Activated CD8-positive, alpha-beta T cell treated with anti-CD3 and anti-CD28 coated beads, Interleukin-2, amount 10 ng/mL, durations not matched to agents 7 days and 5 days (primary cell): ENCODE measurements at regions of chr16 and their contacts with region 1.

Region 1: DNA sequence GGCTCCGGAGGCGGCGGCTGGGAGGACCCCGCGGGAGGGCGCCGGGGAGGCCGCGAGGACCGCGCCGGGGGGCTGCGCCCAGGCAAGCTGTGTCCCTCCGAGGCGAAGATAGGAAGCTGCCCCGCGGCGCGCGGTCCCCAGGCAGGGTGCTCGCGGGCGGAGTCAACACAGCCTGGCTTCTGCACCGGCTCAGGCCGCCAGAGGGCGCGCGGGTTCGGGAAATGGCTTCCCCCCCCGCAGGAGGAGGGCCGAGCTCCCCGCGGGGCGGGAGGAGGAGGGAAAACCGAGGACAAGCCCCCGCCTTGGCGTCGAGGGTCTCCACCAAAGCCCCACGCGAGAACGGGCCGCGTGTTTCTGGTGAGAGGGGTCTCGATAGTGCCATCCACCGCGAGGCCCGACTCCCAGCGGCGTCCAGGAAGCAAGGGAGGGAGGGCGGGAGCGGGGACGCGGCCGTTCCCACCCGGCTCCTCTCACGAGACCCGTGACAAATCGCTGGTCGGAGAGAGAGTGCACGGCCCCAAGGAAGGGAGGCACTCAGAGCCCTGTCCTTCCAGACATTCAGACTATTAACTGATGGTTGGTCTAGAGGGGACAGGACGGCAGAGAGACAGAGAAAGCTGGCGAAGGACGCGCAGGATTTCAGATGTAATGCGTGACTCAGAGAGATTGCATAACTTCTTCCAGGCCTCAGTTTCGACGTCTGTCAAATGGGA is 64.4 kb upstream of the DNAJA2 start:
- DNase-seq: peak; percentile 90
- ATAC-seq: peak; percentile 97
- H3K4me3 Mint-ChIP-seq: peak overlapping the region; percentile 74
- H3K27ac Mint-ChIP-seq: no peak overlapping the region
- H3K4me1 Mint-ChIP-seq: peaks cover 4% of the 10 kb centered on the region
- H3K27me3 Mint-ChIP-seq: peaks cover 12% of the 10 kb centered on the region

Region 2: GRCh38 chr16:47018223-47018891 is 19.5 kb before region 1 on chr16:
- CTCF ChIA-PET with region 1: interaction called, 10 read pairs
- POLR2A ChIA-PET with region 1: interaction called, 3 read pairs
- DNase-seq: peak; percentile 57
- ATAC-seq: peak; percentile 82
- H3K4me3 Mint-ChIP-seq: no peak overlapping the region
- H3K27ac Mint-ChIP-seq: no peak overlapping the region
- H3K4me1 Mint-ChIP-seq: peaks cover 29% of the 10 kb centered on the region
- H3K27me3 Mint-ChIP-seq: peaks cover 3% of the 10 kb centered on the region

Region 3: GRCh38 chr16:47136101-47136820 is 98.4 kb after region 1 on chr16:
- CTCF ChIA-PET with region 1: interaction called, 21 read pairs
- POLR2A ChIA-PET with region 1: no interaction called
- DNase-seq: no peak
- ATAC-seq: peak; percentile 44
- H3K4me3 Mint-ChIP-seq: no peak overlapping the region
- H3K27ac Mint-ChIP-seq: no peak overlapping the region
- H3K4me1 Mint-ChIP-seq: peaks cover 6% of the 10 kb centered on the region
- H3K27me3 Mint-ChIP-seq: no peaks in the 10 kb centered on the region

Region 4: DNA sequence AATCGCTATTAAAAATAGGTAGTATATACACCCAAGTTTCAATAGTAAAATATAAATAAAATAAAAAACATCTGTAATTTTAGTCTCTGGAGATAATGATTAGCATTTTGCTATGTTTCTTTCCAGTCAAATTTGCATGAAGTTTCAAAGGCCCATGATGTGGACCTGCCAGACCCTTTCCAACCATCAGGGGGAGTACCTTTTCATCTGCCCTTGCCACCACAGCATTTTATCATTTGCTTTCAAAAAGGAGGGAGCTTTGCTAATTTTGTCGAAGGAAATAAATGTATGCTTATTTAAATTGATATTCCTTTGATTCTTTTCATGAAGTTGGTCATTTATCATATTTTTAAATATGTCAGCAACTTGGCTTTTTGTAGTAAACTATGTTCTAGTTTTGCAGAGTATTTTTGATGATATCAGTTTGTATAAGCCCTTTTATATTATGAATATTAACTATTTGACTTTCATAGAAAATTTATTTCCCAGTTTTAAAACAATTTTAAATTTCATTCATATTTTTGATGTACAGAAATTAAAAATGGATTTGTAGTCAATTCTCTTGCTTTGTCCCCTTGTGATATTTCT is 221.1 kb after region 1 on chr16:
- CTCF ChIA-PET with region 1: no interaction called
- POLR2A ChIA-PET with region 1: no interaction called
- DNase-seq: peak; percentile 24
- ATAC-seq: no peak
- H3K4me3 Mint-ChIP-seq: no peak overlapping the region
- H3K27ac Mint-ChIP-seq: no peak overlapping the region
- H3K4me1 Mint-ChIP-seq: no peaks in the 10 kb centered on the region
- H3K27me3 Mint-ChIP-seq: no peaks in the 10 kb centered on the region

Region 5: GRCh38 chr16:48156790-48157209 is 1118.9 kb after region 1 on chr16:
- CTCF ChIA-PET with region 1: interaction called, 11 read pairs
- POLR2A ChIA-PET with region 1: no interaction called
- DNase-seq: peak; percentile 83
- ATAC-seq: peak; percentile 72
- H3K4me3 Mint-ChIP-seq: no peak overlapping the region
- H3K27ac Mint-ChIP-seq: no peak overlapping the region
- H3K4me1 Mint-ChIP-seq: peaks cover 14% of the 10 kb centered on the region
- H3K27me3 Mint-ChIP-seq: peaks cover 10% of the 10 kb centered on the region

Region 6: DNA sequence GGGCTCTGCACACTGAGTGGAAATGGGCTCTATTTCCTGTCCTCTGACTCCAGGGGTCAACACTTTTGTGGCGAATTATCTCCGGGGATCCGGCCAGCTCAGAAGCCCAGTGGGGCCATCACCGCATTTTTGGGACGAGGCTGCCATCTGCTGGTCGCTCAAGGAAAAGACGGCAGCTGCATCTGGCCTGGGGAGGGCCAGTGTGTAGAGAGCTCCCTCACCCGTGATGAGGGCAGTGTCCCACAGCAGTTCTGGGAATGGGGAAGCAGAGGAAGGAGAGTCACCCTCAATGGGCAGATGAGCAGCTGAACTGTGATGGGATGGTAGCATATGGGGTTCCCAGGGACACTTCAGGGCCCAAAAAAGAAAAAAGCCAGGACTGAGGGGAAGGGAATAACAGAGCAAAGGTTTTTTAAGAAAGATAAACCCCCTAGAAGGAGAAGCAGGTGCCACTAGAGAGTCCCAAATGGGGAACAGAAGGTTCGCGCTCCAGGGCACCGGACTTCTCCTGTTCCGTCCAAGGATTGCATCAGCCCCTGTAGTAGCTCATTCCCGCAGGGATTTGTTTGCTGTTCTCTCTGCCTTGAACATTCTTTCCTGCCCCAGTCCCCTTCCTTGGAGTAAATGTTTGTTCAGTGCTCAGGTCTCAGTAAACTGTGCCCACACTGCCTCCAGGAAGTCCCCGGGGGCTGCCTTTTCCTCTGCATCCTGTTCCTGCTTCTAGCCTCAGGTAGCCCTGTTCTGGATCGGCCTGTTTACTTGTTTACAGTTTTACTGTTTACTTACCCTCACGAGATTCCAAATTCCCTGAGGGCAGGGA is 1127.2 kb after region 1 on chr16:
- CTCF ChIA-PET with region 1: interaction called, 10 read pairs
- POLR2A ChIA-PET with region 1: no interaction called
- DNase-seq: peak; percentile 71
- ATAC-seq: peak; percentile 96
- H3K4me3 Mint-ChIP-seq: no peak overlapping the region
- H3K27ac Mint-ChIP-seq: no peak overlapping the region
- H3K4me1 Mint-ChIP-seq: peaks cover 11% of the 10 kb centered on the region
- H3K27me3 Mint-ChIP-seq: peaks cover 2% of the 10 kb centered on the region